Activated T-helper 1 cell treated with anti-CD3 and anti-CD28 coated beads, Interleukin-12 subunit alpha, Interleukin-12 subunit beta, Interleukin-2, Interleukin-4 antibody, amounts not matched to agents 30 ng/mL and 10 ng/mL and 1 ng/mL, durations not matched to agents 14 hours and 24 hours and 36 hours (primary cell): ENCODE measurements at regions of chr7 and their contacts with region 1.

Region 1: GRCh38 chr7:94004024-94004951 is at the start of gene BET1:
- DNase-seq: peak; percentile 88
- H3K4me3 Mint-ChIP-seq: peak within 1 kb of the TSS; percentile 97
- H3K27ac Mint-ChIP-seq: peak within 1 kb of the TSS; percentile 97
- H3K4me1 Mint-ChIP-seq: peaks cover 35% of the 10 kb centered on the region
- H3K27me3 Mint-ChIP-seq: peaks cover 4% of the 10 kb centered on the region
- total RNA-seq, gene BET1: 21.4 and 21.6 TPM in 2 replicates

Region 2: DNA sequence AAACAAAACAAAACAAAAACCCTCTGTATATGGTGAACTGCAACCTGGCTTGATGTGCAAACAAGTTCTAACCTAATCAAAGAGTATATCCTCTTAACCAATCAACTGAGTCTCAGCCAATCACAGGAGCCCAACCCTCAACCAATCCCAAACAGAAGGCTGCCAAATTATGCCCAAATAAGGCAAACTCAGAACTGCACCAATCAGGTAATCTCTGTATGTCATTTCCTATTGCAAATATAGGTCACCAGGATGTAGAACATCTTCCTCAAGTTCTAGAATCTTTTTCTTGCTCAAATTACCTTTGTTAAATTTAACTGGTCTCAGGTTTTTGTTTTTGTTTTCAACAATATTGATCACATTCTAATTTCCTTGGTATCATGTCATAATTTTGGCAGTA is 1419.3 kb before region 1 on chr7:
- intact Hi-C with region 1: loop called (anchors 5 kb)
- DNase-seq: no peak
- H3K4me3 Mint-ChIP-seq: no peak overlapping the region
- H3K27ac Mint-ChIP-seq: no peak overlapping the region
- H3K4me1 Mint-ChIP-seq: peaks cover 70% of the 10 kb centered on the region
- H3K27me3 Mint-ChIP-seq: no peaks in the 10 kb centered on the region

Region 3: DNA sequence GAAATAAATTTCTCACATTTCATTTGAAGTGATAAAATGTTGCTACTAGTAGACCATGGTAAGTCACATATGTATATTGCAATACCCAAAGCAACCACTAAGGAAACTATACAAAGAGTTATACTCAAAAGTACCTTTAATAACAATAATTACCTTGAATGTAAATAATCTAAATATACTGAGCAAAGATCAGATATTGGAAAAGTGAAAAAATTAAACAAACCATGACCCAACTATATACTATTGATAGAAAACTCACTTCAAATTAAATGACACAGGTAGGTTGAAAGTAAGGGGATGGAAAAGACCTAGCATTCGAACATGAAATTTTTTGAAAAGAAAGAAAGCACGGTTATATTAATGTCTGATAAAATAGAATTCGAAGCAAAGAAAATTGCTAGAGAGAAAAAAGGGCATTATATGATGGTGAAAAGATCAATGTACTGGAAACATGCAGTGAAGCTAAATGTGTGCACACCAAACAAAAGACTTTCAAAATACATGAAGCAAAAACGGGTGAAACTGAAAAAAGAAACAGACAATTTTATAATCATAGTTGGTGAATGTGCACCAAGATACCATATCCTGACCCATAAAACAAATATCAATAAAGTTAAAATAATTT is 142.9 kb before region 1 on chr7:
- intact Hi-C with region 1: no loop called
- DNase-seq: no peak
- H3K4me3 Mint-ChIP-seq: no peak overlapping the region
- H3K27ac Mint-ChIP-seq: no peak overlapping the region
- H3K4me1 Mint-ChIP-seq: no peaks in the 10 kb centered on the region
- H3K27me3 Mint-ChIP-seq: peaks cover 4% of the 10 kb centered on the region

Region 4: GRCh38 chr7:93902777-93903423 is 101.4 kb before region 1 on chr7:
- intact Hi-C with region 1: loop called (anchors 5 kb)
- DNase-seq: no peak
- H3K4me3 Mint-ChIP-seq: no peak overlapping the region
- H3K27ac Mint-ChIP-seq: no peak overlapping the region
- H3K4me1 Mint-ChIP-seq: no peaks in the 10 kb centered on the region
- H3K27me3 Mint-ChIP-seq: peaks cover 9% of the 10 kb centered on the region

Region 5: DNA sequence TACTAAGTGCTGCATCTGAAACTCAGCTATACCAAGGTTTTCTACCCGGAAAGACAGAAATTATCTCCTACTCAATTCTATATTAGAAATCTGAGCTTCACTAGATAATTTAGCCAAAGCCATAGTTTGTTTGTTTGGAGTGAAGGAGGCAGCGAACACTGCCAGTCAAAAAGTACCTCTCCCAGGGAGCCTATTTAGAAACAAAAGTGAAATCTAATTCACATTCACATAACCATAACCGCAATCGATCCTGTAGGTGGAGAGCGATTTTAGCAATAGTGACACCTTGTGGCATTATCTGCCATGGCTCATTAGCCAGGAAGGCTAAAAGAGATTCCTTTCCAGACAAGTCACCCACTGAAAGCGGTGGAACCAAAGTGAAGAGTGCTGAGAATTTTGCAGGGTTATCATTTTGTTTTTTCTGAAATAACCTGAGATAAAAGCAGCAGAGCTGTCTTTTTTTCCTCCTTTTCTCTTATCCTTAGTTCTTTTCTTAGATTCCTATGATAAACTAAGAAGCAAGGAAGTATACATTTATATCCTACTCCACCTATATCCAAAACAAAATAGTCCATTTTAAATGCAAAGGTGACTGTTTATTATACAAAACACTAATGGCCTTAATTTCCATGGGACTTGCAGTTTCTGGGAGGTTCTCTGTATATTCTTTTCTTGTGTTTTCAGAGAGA is 83.5 kb after region 1 on chr7:
- intact Hi-C with region 1: loop called (anchors 1 kb)
- DNase-seq: peak; percentile 41
- H3K4me3 Mint-ChIP-seq: peak overlapping the region; percentile 48
- H3K27ac Mint-ChIP-seq: no peak overlapping the region
- H3K4me1 Mint-ChIP-seq: peaks cover 7% of the 10 kb centered on the region
- H3K27me3 Mint-ChIP-seq: peaks cover 26% of the 10 kb centered on the region

Region 6: GRCh38 chr7:94657771-94658693 is 653.7 kb after region 1 on chr7:
- intact Hi-C with region 1: loop called (anchors 1 kb)
- DNase-seq: peak; percentile 86
- H3K4me3 Mint-ChIP-seq: peak overlapping the region; percentile 83
- H3K27ac Mint-ChIP-seq: no peak overlapping the region
- H3K4me1 Mint-ChIP-seq: peaks cover 19% of the 10 kb centered on the region
- H3K27me3 Mint-ChIP-seq: peaks cover 26% of the 10 kb centered on the region

Region 7: DNA sequence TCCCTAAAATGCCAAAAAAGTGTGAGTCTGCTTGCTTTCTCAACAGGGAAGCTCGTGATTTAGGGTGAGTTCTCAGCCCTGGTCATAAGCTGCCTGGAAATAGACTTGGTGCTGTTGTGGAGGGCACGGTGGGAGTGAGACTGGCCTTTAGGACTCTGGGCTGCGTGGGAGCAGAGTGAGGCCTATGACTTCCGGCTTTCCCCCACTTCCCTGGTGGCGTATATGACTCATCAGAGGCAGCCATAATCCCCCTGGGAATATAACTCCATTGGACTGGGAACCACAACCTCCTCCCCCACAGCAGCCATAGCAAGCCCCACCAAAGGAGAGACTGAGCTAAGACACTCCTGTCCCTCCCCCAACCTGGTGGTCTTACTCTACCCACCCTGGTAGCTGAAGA is 1225.0 kb after region 1 on chr7:
- intact Hi-C with region 1: no loop called
- DNase-seq: no peak
- H3K4me3 Mint-ChIP-seq: no peak overlapping the region
- H3K27ac Mint-ChIP-seq: no peak overlapping the region
- H3K4me1 Mint-ChIP-seq: no peaks in the 10 kb centered on the region
- H3K27me3 Mint-ChIP-seq: no peaks in the 10 kb centered on the region